Activated CD4-positive, alpha-beta T cell treated with anti-CD3 and anti-CD28 coated beads for 36 hours (primary cell): ENCODE measurements at regions of chr12 and their contacts with region 1.

Region 1: DNA sequence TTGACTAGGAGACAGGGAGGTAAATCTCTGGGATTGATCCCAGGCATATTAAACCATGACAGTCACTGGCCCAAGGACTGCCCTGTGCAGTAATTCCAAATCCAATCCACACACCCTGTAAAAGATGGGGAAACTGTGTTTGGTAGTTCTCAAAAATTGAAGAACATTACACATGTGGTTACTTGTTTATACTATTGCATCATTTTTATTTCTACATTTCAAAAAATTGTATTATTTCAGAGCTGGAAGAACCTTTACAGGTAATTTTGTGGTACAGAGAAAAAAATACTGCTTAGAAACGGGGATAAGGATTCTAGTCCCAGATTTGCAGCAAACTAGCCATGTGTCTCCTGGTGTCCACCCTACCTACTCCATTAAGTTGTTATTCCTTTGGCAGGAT is 400.5 kb downstream of the LRIG3 start:
- DNase-seq: no peak
- ATAC-seq: no peak
- H3K4me3 Mint-ChIP-seq: no peak overlapping the region
- H3K27ac Mint-ChIP-seq: no peak overlapping the region
- H3K4me1 Mint-ChIP-seq: no peaks in the 10 kb centered on the region
- H3K27me3 Mint-ChIP-seq: no peaks in the 10 kb centered on the region

Region 2: GRCh38 chr12:58288190-58288589 is 231.7 kb before region 1 on chr12:
- CTCF ChIA-PET with region 1: no interaction called
- POLR2A ChIA-PET with region 1: no interaction called
- intact Hi-C with region 1: no loop called
- DNase-seq: no peak
- ATAC-seq: no peak
- H3K4me3 Mint-ChIP-seq: no peak overlapping the region
- H3K27ac Mint-ChIP-seq: no peak overlapping the region
- H3K4me1 Mint-ChIP-seq: no peaks in the 10 kb centered on the region
- H3K27me3 Mint-ChIP-seq: peaks cover 9% of the 10 kb centered on the region

Region 3: GRCh38 chr12:58465418-58465817 is 54.4 kb before region 1 on chr12:
- CTCF ChIA-PET with region 1: no interaction called
- POLR2A ChIA-PET with region 1: no interaction called
- intact Hi-C with region 1: loop called in 1 of 2 experiments (anchors 5 kb)
- DNase-seq: no peak
- ATAC-seq: no peak
- H3K4me3 Mint-ChIP-seq: no peak overlapping the region
- H3K27ac Mint-ChIP-seq: no peak overlapping the region
- H3K4me1 Mint-ChIP-seq: no peaks in the 10 kb centered on the region
- H3K27me3 Mint-ChIP-seq: no peaks in the 10 kb centered on the region

Region 4: GRCh38 chr12:58841058-58841798 is 321.4 kb after region 1 on chr12:
- CTCF ChIA-PET with region 1: no interaction called
- POLR2A ChIA-PET with region 1: no interaction called
- intact Hi-C with region 1: no loop called
- DNase-seq: no peak
- ATAC-seq: no peak
- H3K4me3 Mint-ChIP-seq: no peak overlapping the region
- H3K27ac Mint-ChIP-seq: no peak overlapping the region
- H3K4me1 Mint-ChIP-seq: no peaks in the 10 kb centered on the region
- H3K27me3 Mint-ChIP-seq: peaks cover 3% of the 10 kb centered on the region